HCT116 (cell line): ENCODE measurements at regions of chr4 and their contacts with region 1.

Region 1: DNA sequence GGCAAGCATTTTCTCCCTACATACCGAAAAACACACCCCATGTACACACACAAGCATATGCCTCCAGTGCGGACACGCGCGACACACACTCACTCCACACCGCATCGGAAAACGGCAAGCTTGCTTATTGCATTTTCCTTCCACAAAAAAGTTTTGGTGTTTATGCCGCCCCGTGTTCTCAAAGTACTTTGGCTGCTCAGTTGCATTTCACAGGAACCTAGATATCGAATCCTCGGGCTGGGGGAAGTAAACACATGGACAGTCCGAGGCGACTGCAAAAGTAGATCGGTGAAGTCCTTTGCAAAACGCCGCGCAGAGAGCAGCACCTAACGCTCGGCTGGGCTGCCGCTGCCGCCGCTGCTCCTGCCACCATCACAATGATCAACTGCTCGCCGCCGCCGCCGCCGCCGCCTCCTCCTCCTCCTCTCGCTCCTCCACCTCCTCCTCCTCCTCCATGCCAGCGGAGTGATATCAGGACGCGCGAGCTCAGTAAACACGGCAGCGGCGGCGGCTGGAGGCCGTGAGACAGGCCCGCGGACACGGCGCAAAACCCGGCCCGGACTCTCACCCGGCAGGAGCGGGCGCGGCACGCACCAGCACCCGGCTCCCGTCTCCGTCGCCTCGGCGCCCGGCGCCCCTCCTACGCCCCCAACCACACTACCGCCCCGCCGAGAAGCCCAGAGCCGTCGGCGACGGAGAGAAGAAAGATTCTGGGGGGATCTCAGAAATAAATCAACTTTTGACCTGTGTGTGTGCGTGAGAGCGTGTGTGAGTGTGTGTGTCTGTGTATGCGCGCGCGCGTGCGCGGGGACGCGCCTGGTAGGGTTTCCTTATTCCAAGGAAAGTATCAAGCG is at the start of gene MAML3:
- DNase-seq: peak; percentile 90
- ATAC-seq: peak; percentile 41
- H3K4me3 ChIP-seq: peak within 1 kb of the TSS; percentile 70 to 80
- H3K27ac ChIP-seq: peak within 1 kb of the TSS; percentile 28; the same call in 1 of the 2 replicates
- H3K4me1 ChIP-seq: peaks cover 8 to 30% of the 10 kb centered on the region in 2 experiments
- H3K27me3 ChIP-seq: no peaks in the 10 kb centered on the region
- CTCF ChIP-seq: no peak
- POLR2A ChIP-seq: no peak
- RAD21 ChIP-seq: no peak
- total RNA-seq, gene MAML3: 3.1 TPM

Region 2: DNA sequence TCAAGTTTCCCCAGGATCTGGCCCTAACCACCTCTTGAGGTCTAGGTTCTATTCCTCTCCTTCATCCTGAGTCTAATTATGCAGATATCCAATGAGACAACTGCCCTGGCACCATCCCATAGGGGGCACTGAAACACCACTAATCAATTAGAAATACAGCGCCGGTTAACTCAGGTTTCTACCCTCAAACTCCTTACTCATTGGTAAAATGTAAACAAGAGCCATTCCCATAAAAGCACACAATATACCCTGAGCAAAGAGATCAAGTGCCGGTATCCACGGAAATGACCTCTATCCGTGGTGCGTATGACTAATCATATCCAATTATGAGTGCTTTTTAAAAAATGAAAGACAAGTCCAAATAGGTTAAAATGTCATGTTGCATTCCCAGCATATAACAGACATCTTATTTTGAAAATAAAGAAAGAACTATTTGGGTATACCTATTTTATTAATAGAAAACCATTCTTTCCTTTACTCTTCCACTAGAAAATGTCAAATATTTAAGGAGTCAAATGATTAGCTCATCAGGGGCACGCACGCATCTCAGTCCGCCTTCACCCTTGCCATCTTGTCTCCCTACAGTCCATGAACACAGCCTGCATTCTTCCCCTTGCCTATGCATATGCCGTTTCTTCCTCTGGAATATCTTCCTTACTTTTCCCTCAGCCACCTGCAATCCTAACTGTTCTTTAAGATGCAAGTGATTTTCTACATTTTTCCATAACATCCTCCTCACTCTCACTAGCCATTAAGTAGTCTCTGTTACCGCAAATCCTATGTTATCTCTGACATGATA is 141.1 kb before region 1 on chr4:
- CTCF ChIA-PET with region 1: no interaction called
- POLR2A ChIA-PET with region 1: interaction called, 3 read pairs
- RAD21 ChIA-PET with region 1: no interaction called
- intact Hi-C with region 1: loop called (anchors 5 kb)
- DNase-seq: peak; percentile 50
- ATAC-seq: peak; percentile 98
- H3K4me3 ChIP-seq: no peak overlapping the region
- H3K27ac ChIP-seq: no peak overlapping the region
- H3K4me1 ChIP-seq: peaks cover 3 to 7% of the 10 kb centered on the region in 2 experiments; a peak in 2 of 4 replicates
- H3K27me3 ChIP-seq: no peaks in the 10 kb centered on the region
- CTCF ChIP-seq: peak; percentile 69 to 87 (median 78)
- POLR2A ChIP-seq: no peak
- RAD21 ChIP-seq: peak; percentile 95

Region 3: GRCh38 chr4:140049024-140049848 is 104.7 kb before region 1 on chr4:
- CTCF ChIA-PET with region 1: interaction called, 10 read pairs
- POLR2A ChIA-PET with region 1: no interaction called
- RAD21 ChIA-PET with region 1: interaction called in 1 of 2 experiments, 3 read pairs
- intact Hi-C with region 1: loop called (anchors 2 kb)
- DNase-seq: no peak
- ATAC-seq: no peak
- H3K4me3 ChIP-seq: no peak overlapping the region
- H3K27ac ChIP-seq: no peak overlapping the region
- H3K4me1 ChIP-seq: peaks cover 0 to 6% of the 10 kb centered on the region in 2 experiments; a peak in 1 of 4 replicates
- H3K27me3 ChIP-seq: peaks cover 8% of the 10 kb centered on the region; the same call in 1 of the 2 replicates
- CTCF ChIP-seq: no peak
- POLR2A ChIP-seq: no peak
- RAD21 ChIP-seq: no peak

Region 4: GRCh38 chr4:140095694-140096482 is 58.1 kb before region 1 on chr4:
- CTCF ChIA-PET with region 1: no interaction called
- POLR2A ChIA-PET with region 1: interaction called, 6 read pairs
- RAD21 ChIA-PET with region 1: no interaction called
- intact Hi-C with region 1: loop called (anchors 5 kb)
- DNase-seq: peak; percentile 62
- ATAC-seq: peak; percentile 59
- H3K4me3 ChIP-seq: peak overlapping the region in 1 of 2 experiments; percentile 9; a peak in 2 of 4 replicates
- H3K27ac ChIP-seq: no peak overlapping the region
- H3K4me1 ChIP-seq: peaks cover 30 to 70% of the 10 kb centered on the region in 2 experiments
- H3K27me3 ChIP-seq: no peaks in the 10 kb centered on the region
- CTCF ChIP-seq: no peak
- POLR2A ChIP-seq: no peak
- RAD21 ChIP-seq: no peak

Region 5: DNA sequence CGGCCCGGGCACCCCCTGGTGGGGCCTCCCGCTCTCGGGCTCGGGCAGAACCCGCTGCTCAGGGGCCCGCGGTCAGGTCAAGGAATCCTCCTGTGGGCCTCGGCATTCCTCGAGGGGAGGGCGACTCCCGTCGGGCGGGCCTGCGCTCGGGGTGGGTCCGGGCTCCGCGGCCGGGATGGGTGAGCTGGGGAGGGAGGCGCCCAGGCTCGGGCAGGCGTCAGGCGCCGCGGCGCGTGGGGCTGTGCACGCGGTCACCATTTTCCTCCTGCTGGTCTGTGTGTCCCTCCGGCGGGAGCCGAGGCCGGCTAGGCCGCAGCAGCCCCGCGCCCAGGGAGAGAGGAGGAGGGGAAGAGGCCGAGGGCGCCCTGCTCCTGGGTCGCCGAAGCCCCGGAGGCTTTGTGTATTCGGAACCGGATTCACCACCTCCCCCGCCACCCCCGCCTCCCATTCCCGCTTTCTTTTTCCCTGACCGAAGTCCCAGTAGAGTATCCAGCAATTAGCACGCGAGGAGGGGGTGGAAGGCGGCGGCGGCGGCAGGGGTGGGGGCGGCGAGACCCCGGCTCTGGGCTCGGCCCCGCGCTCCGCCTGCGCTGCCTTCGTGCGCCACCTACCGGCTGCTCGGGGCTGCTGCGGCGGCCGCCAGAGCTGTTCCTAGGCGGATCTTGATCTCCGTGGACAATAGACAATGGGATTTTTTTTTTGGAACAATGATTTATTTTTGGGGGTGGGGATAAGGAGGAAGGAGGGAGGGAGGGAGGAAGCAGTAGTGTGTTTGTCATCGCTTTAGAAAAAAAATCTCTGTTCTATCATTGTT is 99.0 kb after region 1 on chr4:
- CTCF ChIA-PET with region 1: interaction called, 6 read pairs
- POLR2A ChIA-PET with region 1: interaction called, 8 read pairs
- RAD21 ChIA-PET with region 1: no interaction called
- intact Hi-C with region 1: loop called (anchors 1 kb)
- DNase-seq: peak; percentile 43
- ATAC-seq: peak; percentile 85
- H3K4me3 ChIP-seq: peak overlapping the region; percentile 43 to 56
- H3K27ac ChIP-seq: peak overlapping the region; percentile 51; the same call in 1 of the 2 replicates
- H3K4me1 ChIP-seq: peaks cover 2 to 47% of the 10 kb centered on the region in 2 experiments; a peak in 3 of 4 replicates
- H3K27me3 ChIP-seq: no peaks in the 10 kb centered on the region
- CTCF ChIP-seq: peak; percentile 53 to 92 (median 76); a peak in 5 of 6 replicates
- POLR2A ChIP-seq: no peak
- RAD21 ChIP-seq: peak; percentile 85